H1 (cell line): ENCODE measurements at regions of chr1 and their contacts with region 1.

Region 1: DNA sequence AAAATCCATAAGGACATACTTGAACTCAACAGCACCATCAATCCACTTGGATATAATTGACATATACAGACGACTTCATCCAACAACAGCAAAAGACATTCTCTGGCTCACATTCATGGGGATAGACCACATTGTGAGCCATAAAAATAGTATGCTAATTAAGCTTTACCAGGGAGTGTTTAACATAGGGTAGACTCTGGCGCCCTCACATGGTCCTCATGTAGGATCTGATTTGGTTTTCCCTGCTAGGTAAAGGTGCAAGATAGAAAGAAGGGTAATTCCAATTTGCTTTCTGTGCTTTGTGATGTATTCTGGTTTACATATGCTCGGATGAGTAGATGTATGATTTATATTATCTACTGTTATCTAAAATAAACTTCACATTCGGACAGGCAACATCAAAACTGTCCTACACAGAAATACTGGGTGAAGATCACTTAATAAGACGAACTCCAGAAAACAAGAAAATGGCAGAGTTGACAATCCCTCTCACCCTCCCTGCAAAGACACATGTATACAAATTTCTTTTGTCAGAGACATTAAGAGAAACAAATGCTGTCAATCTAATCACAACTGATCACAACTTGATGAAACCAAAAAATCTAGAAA is 27.7 kb downstream of the CR1L start:
- DNase-seq: peak in 1 of 2 experiments; percentile 10
- H3K4me3 ChIP-seq: no peak overlapping the region
- H3K27ac ChIP-seq: no peak overlapping the region
- H3K4me1 ChIP-seq: no peaks in the 10 kb centered on the region; a peak in 1 of 7 replicates
- H3K27me3 ChIP-seq: no peaks in the 10 kb centered on the region
- CTCF ChIP-seq: peak in 2 of 3 experiments; percentile 85 to 86; a peak in 3 of 4 replicates
- EP300 ChIP-seq: no peak
- POLR2A ChIP-seq: no peak
- RAD21 ChIP-seq: peak; percentile 96 to 97

Region 2: GRCh38 chr1:207579436-207579799 is 93.2 kb before region 1 on chr1:
- CTCF ChIA-PET with region 1: interaction called, 36 read pairs
- POLR2A ChIA-PET with region 1: no interaction called
- DNase-seq: peak; percentile 36 to 72
- H3K4me3 ChIP-seq: no peak overlapping the region
- H3K27ac ChIP-seq: no peak overlapping the region
- H3K4me1 ChIP-seq: peaks cover 0 to 4% (median 3%) of the 10 kb centered on the region in 4 experiments; a peak in 3 of 7 replicates
- H3K27me3 ChIP-seq: no peaks in the 10 kb centered on the region
- CTCF ChIP-seq: peak; percentile 43 to 86 (median 78)
- EP300 ChIP-seq: no peak
- POLR2A ChIP-seq: no peak
- RAD21 ChIP-seq: peak; percentile 64 to 72

Region 3: GRCh38 chr1:207612762-207613161 is 59.9 kb before region 1 on chr1:
- CTCF ChIA-PET with region 1: interaction called, 12 read pairs
- POLR2A ChIA-PET with region 1: no interaction called
- DNase-seq: no peak
- H3K4me3 ChIP-seq: no peak overlapping the region
- H3K27ac ChIP-seq: no peak overlapping the region
- H3K4me1 ChIP-seq: no peaks in the 10 kb centered on the region; a peak in 1 of 7 replicates
- H3K27me3 ChIP-seq: no peaks in the 10 kb centered on the region
- CTCF ChIP-seq: peak in 1 of 3 experiments; percentile 51; a peak in 2 of 4 replicates
- EP300 ChIP-seq: no peak
- POLR2A ChIP-seq: no peak
- RAD21 ChIP-seq: peak in 1 of 2 experiments; percentile 25; a peak in 2 of 4 replicates

Region 4: GRCh38 chr1:207619871-207620542 is 52.6 kb before region 1 on chr1:
- CTCF ChIA-PET with region 1: interaction called, 25 read pairs
- POLR2A ChIA-PET with region 1: no interaction called
- DNase-seq: no peak
- H3K4me3 ChIP-seq: no peak overlapping the region
- H3K27ac ChIP-seq: no peak overlapping the region
- H3K4me1 ChIP-seq: peaks cover 0 to 7% (median 3%) of the 10 kb centered on the region in 4 experiments; a peak in 1 of 7 replicates
- H3K27me3 ChIP-seq: no peaks in the 10 kb centered on the region
- CTCF ChIP-seq: peak in 2 of 3 experiments; percentile 53 to 80; a peak in 3 of 4 replicates
- EP300 ChIP-seq: no peak
- POLR2A ChIP-seq: no peak
- RAD21 ChIP-seq: peak; percentile 42 to 58

Region 5: GRCh38 chr1:207659545-207660183 is 13.0 kb before region 1 on chr1:
- CTCF ChIA-PET with region 1: interaction called, 12 read pairs
- POLR2A ChIA-PET with region 1: no interaction called
- DNase-seq: no peak
- H3K4me3 ChIP-seq: no peak overlapping the region
- H3K27ac ChIP-seq: no peak overlapping the region
- H3K4me1 ChIP-seq: no peaks in the 10 kb centered on the region
- H3K27me3 ChIP-seq: no peaks in the 10 kb centered on the region
- CTCF ChIP-seq: no peak
- EP300 ChIP-seq: no peak
- POLR2A ChIP-seq: no peak
- RAD21 ChIP-seq: no peak

Region 6: GRCh38 chr1:207698822-207699483 is 26.3 kb after region 1 on chr1:
- CTCF ChIA-PET with region 1: interaction called, 11 read pairs
- POLR2A ChIA-PET with region 1: no interaction called
- DNase-seq: peak; percentile 25 to 81
- H3K4me3 ChIP-seq: no peak overlapping the region
- H3K27ac ChIP-seq: no peak overlapping the region
- H3K4me1 ChIP-seq: peaks cover 0 to 2% (median 0%) of the 10 kb centered on the region in 4 experiments; a peak in 1 of 7 replicates
- H3K27me3 ChIP-seq: no peaks in the 10 kb centered on the region
- CTCF ChIP-seq: peak; percentile 33 to 95 (median 73)
- EP300 ChIP-seq: no peak
- POLR2A ChIP-seq: no peak
- RAD21 ChIP-seq: peak; percentile 76